HCT116 (cell line): ENCODE measurements at regions of chr6 and their contacts with region 1.

Region 1: DNA sequence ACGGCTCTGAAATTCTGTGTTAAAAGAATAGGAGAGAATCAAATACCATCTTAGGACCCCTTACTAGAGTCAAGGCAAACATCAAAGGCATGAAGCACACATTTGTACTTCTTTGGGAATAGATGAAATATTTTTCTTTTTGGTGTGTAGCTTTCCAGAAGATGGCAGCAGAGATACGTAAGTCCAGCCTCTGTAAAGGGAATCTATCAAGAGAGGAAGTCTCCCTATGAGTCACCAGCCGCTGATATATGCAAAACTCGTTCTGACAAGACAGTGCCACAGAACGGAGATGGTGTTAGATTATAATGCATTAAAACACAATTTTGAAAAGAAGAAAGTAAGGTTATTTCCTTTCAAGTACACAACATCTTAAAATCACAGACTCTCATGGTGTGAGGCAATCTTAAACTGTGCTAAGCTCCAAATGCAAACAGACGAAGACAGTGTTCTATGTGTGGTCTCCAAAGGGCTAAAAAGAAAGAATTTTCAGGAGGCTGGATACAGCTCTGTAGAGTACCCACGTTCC is 120.0 kb upstream of the AGPAT4 start:
- DNase-seq: peak; percentile 75
- ATAC-seq: peak; percentile 97
- H3K4me3 ChIP-seq: no peak overlapping the region
- H3K27ac ChIP-seq: no peak overlapping the region
- H3K4me1 ChIP-seq: peaks cover 0 to 6% of the 10 kb centered on the region in 2 experiments; a peak in 2 of 4 replicates
- H3K27me3 ChIP-seq: no peaks in the 10 kb centered on the region
- CTCF ChIP-seq: peak; percentile 27 to 76 (median 73); a peak in 4 of 6 replicates
- POLR2A ChIP-seq: no peak
- RAD21 ChIP-seq: peak; percentile 89

Region 2: DNA sequence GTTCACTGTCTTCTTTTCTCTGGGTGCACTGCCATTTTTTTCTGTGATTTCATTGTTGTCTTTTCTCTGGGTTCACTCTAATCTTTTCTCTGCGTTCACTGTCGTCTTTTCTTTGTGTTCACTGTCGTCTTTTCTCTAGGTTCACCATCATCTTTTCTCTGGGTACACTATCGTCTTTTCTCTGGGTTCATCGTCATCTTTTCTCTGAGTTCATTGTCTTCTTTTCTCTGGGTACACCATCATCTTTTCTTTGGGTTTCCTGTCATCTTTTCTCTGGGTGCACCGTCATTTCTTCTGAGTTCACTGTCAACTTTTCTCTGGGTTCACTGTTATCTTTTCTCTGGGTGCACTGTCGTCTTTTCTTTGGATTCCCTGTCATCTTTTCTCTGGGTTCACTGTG is 540.0 kb before region 1 on chr6:
- CTCF ChIA-PET with region 1: no interaction called
- POLR2A ChIA-PET with region 1: no interaction called
- RAD21 ChIA-PET with region 1: no interaction called
- intact Hi-C with region 1: no loop called
- DNase-seq: no peak
- ATAC-seq: no peak
- H3K4me3 ChIP-seq: no peak overlapping the region
- H3K27ac ChIP-seq: no peak overlapping the region
- H3K4me1 ChIP-seq: no peaks in the 10 kb centered on the region
- H3K27me3 ChIP-seq: no peaks in the 10 kb centered on the region
- CTCF ChIP-seq: no peak
- POLR2A ChIP-seq: no peak
- RAD21 ChIP-seq: no peak

Region 3: DNA sequence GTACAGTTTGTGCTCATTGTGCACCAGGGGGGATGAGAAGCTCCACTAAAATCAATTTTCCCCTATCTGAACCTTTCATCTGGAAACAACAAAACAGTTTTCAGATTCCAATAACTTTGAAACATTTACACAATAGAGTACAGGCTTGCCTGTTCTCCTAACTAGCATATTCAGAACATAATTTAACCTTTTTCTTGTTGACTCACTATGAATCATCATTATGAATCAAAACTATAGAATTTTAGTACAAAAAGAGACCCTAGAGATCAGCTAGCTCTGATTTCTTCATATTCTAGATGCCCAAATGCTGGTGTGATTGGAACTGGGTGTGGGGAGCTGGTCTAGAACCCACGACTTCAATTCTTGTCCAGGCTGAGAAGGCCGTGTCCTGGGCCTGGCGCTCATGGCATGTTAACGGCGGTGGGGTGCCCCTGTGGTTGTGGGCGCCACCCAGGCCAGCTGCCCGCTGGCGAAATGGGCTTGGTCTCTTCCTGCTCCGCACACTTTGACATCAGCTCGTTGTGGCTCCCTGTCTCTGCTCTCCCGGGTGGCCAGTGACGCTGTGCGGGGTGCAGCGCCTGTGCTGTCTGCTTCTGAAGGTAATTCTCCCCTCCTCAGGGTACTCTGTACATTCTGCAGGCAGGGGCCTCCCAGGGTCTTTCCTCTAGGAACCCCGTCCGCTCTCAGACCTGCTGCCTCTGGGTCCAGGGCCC is 90.1 kb before region 1 on chr6:
- CTCF ChIA-PET with region 1: no interaction called
- POLR2A ChIA-PET with region 1: no interaction called
- RAD21 ChIA-PET with region 1: no interaction called
- intact Hi-C with region 1: no loop called
- DNase-seq: no peak
- ATAC-seq: peak; percentile 72
- H3K4me3 ChIP-seq: no peak overlapping the region; a peak in 1 of 4 replicates
- H3K27ac ChIP-seq: peak overlapping the region; percentile 37; the same call in 1 of the 2 replicates
- H3K4me1 ChIP-seq: peaks cover 5 to 28% of the 10 kb centered on the region in 2 experiments
- H3K27me3 ChIP-seq: no peaks in the 10 kb centered on the region
- CTCF ChIP-seq: no peak
- POLR2A ChIP-seq: no peak
- RAD21 ChIP-seq: no peak; the same call in 1 of the 2 replicates

Region 4: DNA sequence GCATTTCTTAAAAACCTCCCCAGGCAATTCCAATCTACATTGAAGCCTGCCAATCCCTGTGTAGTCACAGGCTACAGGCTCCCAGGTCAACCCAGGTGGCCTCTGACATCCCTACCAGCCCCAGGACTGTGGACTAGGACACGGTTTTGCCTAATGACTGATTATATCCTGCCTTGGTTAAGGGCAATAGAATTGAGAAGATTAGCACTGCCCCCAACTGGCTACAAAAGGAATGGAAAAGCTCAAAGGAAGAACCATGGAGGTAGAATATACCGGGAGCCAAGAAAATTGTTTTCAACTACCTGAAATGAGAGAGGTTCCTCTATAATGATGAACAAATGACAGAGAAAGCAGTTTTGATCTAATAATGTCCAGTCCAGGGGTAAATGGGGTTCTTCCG is 301.1 kb after region 1 on chr6:
- CTCF ChIA-PET with region 1: no interaction called
- POLR2A ChIA-PET with region 1: no interaction called
- RAD21 ChIA-PET with region 1: no interaction called
- intact Hi-C with region 1: loop called (anchors 2 kb)
- DNase-seq: peak; percentile 7
- ATAC-seq: peak; percentile 87
- H3K4me3 ChIP-seq: no peak overlapping the region
- H3K27ac ChIP-seq: no peak overlapping the region
- H3K4me1 ChIP-seq: no peaks in the 10 kb centered on the region
- H3K27me3 ChIP-seq: no peaks in the 10 kb centered on the region
- CTCF ChIP-seq: peak; percentile 40 to 55 (median 55)
- POLR2A ChIP-seq: no peak
- RAD21 ChIP-seq: peak; percentile 65